Activated CD8-positive, alpha-beta T cell treated with anti-CD3 and anti-CD28 coated beads for 36 hours (primary cell): ENCODE measurements at regions of chr6 and their contacts with region 1.

Region 1: GRCh38 chr6:35297601-35298481 is at the start of gene DEF6:
- DNase-seq: peak; percentile 95
- ATAC-seq: peak; percentile 75
- H3K4me3 Mint-ChIP-seq: peak within 1 kb of the TSS; percentile 92
- H3K27ac Mint-ChIP-seq: peak within 1 kb of the TSS; percentile 93
- H3K4me1 Mint-ChIP-seq: peaks cover 45% of the 10 kb centered on the region
- H3K27me3 Mint-ChIP-seq: no peaks in the 10 kb centered on the region
- CTCF ChIP-seq: peak; percentile 93
- total RNA-seq, gene DEF6: 97.1 to 99.1 TPM

Region 2: DNA sequence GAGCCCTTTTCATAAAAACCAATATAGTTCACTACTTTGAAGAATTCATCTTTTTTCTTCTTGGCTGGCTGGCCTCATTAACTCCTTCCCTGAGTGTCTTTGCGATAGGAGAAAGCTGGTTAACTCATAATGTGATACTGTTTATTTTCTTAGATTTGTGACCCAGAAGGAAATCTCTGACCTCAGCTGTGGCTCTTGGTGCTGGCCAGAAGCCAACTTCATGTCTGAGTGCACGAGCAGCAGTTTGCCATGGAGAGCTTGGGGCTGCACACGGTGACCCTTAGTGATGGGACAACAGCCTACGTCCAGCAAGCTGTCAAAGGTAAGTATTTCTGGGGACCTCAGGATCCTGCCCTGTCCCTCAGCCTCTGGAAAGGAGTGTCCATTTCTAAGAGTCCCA is 16.9 kb before region 1 on chr6:
- CTCF ChIA-PET with region 1: interaction called, 13 read pairs
- POLR2A ChIA-PET with region 1: interaction called, 3 read pairs
- intact Hi-C with region 1: no loop called
- DNase-seq: no peak
- ATAC-seq: no peak
- H3K4me3 Mint-ChIP-seq: no peak overlapping the region
- H3K27ac Mint-ChIP-seq: no peak overlapping the region
- H3K4me1 Mint-ChIP-seq: no peaks in the 10 kb centered on the region
- H3K27me3 Mint-ChIP-seq: no peaks in the 10 kb centered on the region
- CTCF ChIP-seq: no peak

Region 3: DNA sequence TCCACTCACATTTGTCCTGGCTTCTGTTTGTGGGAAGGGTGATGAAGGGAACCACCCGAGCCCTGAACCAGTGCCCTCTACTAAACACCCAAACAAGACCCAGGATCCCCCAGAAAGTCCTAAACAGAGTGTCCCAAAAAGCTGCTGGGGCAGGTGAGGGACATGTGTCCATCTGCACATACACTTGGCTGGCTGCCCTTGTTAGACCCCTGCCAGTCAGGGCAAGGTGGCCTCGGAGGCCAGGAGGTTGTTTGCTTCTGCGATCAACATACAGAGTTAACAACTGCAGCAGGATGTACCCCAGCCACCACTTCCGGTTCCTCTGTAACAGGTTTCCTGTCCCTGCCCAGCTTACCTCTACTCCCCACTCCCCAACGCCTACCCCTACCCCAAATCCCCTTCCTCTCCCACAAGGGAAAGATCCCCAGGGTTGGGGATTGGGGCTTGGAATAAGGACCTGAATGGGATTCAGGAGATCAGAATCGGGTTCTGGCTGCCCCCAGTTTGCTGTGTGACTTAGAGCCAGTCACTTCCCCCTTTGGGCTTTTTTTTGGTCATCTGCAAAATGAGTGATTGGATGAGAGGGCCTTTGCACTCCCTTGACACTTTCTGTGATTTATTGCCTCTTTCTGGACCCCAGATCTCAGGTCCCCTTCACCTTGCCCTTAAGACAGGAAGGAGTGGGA is 13.7 kb after region 1 on chr6:
- CTCF ChIA-PET with region 1: interaction called, 36 read pairs
- POLR2A ChIA-PET with region 1: interaction called, 18 read pairs
- intact Hi-C with region 1: no loop called
- DNase-seq: peak; percentile 64
- ATAC-seq: peak; percentile 70
- H3K4me3 Mint-ChIP-seq: peak overlapping the region; percentile 57
- H3K27ac Mint-ChIP-seq: peak overlapping the region; percentile 96
- H3K4me1 Mint-ChIP-seq: peaks cover 87% of the 10 kb centered on the region
- H3K27me3 Mint-ChIP-seq: no peaks in the 10 kb centered on the region
- CTCF ChIP-seq: no peak

Region 4: DNA sequence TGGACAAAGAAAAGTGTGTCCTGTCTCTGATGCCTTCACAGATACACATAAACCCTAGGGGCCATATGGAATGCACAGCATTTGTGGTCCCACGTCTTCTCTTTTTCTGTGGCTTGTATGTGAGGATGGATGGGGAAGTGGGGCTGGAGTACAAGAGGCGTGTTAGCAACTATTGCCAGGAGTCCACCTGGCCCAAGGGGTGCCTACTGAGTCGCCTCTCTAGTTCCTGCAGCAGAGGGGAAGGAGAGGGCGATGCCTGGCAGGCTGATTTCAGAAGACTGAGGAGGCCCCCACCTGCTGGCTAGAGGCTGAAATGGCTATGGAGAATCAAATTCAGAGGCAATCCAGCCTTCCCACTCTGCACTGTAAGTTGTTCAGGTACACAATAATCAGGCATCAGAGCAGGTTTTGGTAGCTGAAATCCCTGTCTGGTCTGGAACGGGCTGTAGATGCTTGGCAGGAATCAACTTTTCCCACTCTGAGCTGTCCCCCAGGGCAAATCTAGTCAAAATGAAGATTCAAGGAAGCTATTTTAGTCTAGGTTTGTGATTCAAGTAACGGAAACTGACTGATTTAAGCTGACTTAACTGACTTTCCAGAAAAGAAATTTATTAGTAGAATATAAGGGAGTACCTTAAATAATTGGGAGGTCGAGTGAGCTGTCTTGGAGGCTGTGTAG is 29.6 kb after region 1 on chr6:
- CTCF ChIA-PET with region 1: interaction called, 241 read pairs
- POLR2A ChIA-PET with region 1: interaction called, 19 read pairs
- intact Hi-C with region 1: loop called (anchors 1 kb)
- DNase-seq: peak; percentile 88
- ATAC-seq: peak; percentile 95
- H3K4me3 Mint-ChIP-seq: no peak overlapping the region
- H3K27ac Mint-ChIP-seq: peak overlapping the region; percentile 68
- H3K4me1 Mint-ChIP-seq: peaks cover 18% of the 10 kb centered on the region
- H3K27me3 Mint-ChIP-seq: no peaks in the 10 kb centered on the region
- CTCF ChIP-seq: peak; percentile 76

Region 5: GRCh38 chr6:35445696-35446095 is 147.9 kb after region 1 on chr6:
- CTCF ChIA-PET with region 1: interaction called, 64 read pairs
- POLR2A ChIA-PET with region 1: interaction called, 3 read pairs
- intact Hi-C with region 1: loop called (anchors 2 kb)
- DNase-seq: peak; percentile 73
- ATAC-seq: peak; percentile 48
- H3K4me3 Mint-ChIP-seq: no peak overlapping the region
- H3K27ac Mint-ChIP-seq: no peak overlapping the region
- H3K4me1 Mint-ChIP-seq: peaks cover 6% of the 10 kb centered on the region
- H3K27me3 Mint-ChIP-seq: no peaks in the 10 kb centered on the region
- CTCF ChIP-seq: no peak

Region 6: DNA sequence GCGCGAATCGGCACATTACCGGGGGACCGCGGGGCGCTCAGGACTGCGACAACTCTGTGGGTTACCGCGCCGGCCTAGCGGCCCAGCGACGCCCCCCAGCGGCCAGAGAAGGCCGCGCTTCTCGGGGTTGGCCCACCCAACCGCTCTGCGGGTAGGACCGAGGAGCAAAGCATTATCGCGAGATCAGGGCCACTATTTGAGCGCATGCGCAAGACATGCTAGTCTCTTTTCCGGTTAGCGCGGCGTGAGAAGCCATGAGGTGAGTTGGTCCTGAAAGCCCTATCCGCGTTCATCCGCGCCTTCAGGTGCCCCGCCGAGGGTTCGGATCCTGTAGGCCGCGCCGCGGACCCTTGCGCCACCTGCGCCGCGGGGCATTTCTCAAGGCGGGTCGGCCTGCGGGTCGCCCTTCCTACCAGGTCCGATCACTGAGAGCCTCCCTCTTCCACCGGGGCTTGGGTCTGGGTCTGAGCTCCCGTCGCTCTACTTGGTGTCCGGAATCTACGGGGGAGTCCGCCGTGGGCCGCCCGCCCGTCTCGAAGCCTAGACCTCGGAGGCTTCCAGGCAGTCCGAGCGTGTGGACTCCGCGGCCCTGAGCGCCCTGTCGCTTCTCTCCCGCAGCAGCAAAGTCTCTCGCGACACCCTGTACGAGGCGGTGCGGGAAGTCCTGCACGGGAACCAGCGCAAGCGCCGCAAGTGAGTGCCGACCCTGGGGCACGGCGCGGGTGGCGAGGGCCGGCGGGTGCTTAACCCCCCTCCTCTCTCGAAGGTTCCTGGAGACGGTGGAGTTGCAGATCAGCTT is 170.5 kb after region 1 on chr6 and contains the start of gene RPL10A:
- CTCF ChIA-PET with region 1: interaction called, 7 read pairs
- POLR2A ChIA-PET with region 1: interaction called, 36 read pairs
- intact Hi-C with region 1: loop called (anchors 5 kb)
- DNase-seq: peak; percentile 96
- ATAC-seq: peak; percentile 91
- H3K4me3 Mint-ChIP-seq: peak within 1 kb of the TSS; percentile 97
- H3K27ac Mint-ChIP-seq: peak within 1 kb of the TSS; percentile 98
- H3K4me1 Mint-ChIP-seq: peaks cover 38% of the 10 kb centered on the region
- H3K27me3 Mint-ChIP-seq: no peaks in the 10 kb centered on the region
- CTCF ChIP-seq: peak; percentile 85
- total RNA-seq, gene RPL10A: 2,322 to 2,393 TPM